ENCODE measurements at regions of chr19 and their contacts with region 1.

Region 1: GRCh38 chr19:50705422-50706019 is 14.1 kb downstream of the SHANK1 start:
- DNase-seq: peak; percentile 21
- ATAC-seq: peak; percentile 96
- H3K4me3 ChIP-seq: no peak overlapping the region
- H3K27ac ChIP-seq: no peak overlapping the region
- H3K4me1 ChIP-seq: no peaks in the 10 kb centered on the region
- H3K27me3 ChIP-seq: no peaks in the 10 kb centered on the region; a peak in 1 of 4 replicates
- CTCF ChIP-seq: peak; percentile 65 to 84 (median 73)
- EP300 ChIP-seq: no peak
- POLR2A ChIP-seq: no peak
- RAD21 ChIP-seq: peak; percentile 62

Region 2: DNA sequence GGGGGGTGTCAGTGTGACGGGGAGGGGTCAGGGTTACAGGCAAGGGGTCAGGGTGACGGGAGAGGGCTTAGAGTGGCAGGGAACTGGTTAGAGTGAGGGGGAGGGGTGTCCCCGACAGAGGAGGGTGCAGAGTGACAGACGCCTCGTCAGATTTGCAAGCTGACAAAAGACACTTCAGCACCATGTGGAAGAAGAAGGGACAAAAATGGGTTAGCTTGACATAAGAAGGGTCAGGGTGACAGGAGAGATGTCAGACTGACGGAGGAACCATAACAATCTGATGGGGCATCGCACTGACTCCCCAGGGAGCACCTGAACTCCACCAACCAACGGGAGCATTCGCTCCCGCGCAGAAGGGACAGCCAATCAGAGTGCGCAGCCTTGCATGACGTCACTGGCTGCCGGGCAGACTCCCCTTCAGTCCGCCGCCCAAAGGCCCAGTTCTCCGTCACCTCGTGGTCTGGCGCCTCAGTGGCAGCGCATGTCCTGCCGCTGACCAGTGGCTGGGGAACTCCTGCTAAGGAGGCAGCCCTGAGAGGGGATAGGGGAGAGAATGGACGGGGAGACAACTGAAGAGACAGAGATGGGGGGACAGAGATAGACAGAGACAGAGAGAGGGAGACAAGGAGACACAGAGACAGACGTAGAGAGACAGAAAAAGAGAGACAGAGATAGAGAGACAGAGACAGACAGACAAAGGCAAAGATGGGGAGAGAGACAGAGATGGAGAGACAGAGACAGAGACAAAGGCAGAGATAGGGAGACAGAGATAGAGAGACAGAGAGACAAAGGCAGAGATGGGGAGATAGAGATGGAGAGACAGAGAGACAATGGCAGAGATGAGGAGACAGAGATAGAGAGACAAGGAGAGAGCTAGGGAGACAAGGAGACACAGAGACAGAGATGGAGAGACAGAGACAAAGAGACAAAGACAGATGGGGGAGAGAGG is 26.1 kb before region 1 on chr19:
- CTCF ChIA-PET with region 1: no interaction called
- POLR2A ChIA-PET with region 1: no interaction called
- RAD21 ChIA-PET with region 1: no interaction called
- SMC1A ChIA-PET with region 1: no interaction called
- in situ Hi-C with region 1: no loop called
- intact Hi-C with region 1: no loop called
- DNase-seq: peak; percentile 61
- ATAC-seq: peak; percentile 99
- H3K4me3 ChIP-seq: no peak overlapping the region
- H3K27ac ChIP-seq: peak overlapping the region; percentile 44; the same call in 1 of the 2 replicates
- H3K4me1 ChIP-seq: peaks cover 2% of the 10 kb centered on the region; the same call in 1 of the 2 replicates
- H3K27me3 ChIP-seq: no peaks in the 10 kb centered on the region
- CTCF ChIP-seq: no peak
- EP300 ChIP-seq: no peak; a peak in 1 of 4 replicates
- POLR2A ChIP-seq: no peak
- RAD21 ChIP-seq: no peak

Region 3: GRCh38 chr19:50739132-50739913 is 33.8 kb after region 1 on chr19:
- CTCF ChIA-PET with region 1: no interaction called
- POLR2A ChIA-PET with region 1: no interaction called
- RAD21 ChIA-PET with region 1: no interaction called
- SMC1A ChIA-PET with region 1: no interaction called
- in situ Hi-C with region 1: no loop called
- intact Hi-C with region 1: no loop called
- DNase-seq: no peak
- ATAC-seq: no peak
- H3K4me3 ChIP-seq: no peak overlapping the region
- H3K27ac ChIP-seq: no peak overlapping the region
- H3K4me1 ChIP-seq: no peaks in the 10 kb centered on the region
- H3K27me3 ChIP-seq: no peaks in the 10 kb centered on the region; a peak in 1 of 4 replicates
- CTCF ChIP-seq: no peak
- EP300 ChIP-seq: no peak
- POLR2A ChIP-seq: no peak
- RAD21 ChIP-seq: no peak

Region 4: DNA sequence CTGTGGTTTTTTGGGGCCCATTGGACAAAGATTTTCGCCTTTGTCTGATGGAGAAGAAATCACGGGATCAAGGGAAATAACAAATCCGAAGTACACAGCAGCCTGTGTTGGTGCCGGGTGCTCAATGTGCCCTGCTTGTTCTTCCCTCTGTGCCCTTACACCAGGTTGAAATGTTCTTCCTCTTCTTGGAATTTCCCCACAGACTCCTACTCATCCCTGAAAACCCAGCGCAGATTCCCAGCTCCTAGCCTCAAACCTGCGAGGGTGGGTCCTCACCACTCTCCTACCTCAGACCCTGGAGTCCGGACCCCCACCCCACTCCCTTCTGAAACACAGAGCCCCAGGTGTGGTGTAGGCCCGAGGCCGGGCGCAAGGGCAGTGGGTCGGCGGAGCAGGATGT is 79.8 kb after region 1 on chr19:
- CTCF ChIA-PET with region 1: interaction called, 10 read pairs
- POLR2A ChIA-PET with region 1: no interaction called
- RAD21 ChIA-PET with region 1: interaction called, 8 read pairs
- SMC1A ChIA-PET with region 1: interaction called, 3 read pairs
- in situ Hi-C with region 1: no loop called
- intact Hi-C with region 1: loop called (anchors 2 kb)
- DNase-seq: no peak
- ATAC-seq: no peak
- H3K4me3 ChIP-seq: no peak overlapping the region
- H3K27ac ChIP-seq: no peak overlapping the region
- H3K4me1 ChIP-seq: no peaks in the 10 kb centered on the region; the same call in 1 of the 2 replicates
- H3K27me3 ChIP-seq: no peaks in the 10 kb centered on the region
- CTCF ChIP-seq: no peak
- EP300 ChIP-seq: no peak
- POLR2A ChIP-seq: no peak
- RAD21 ChIP-seq: no peak

Measured in GM12878 (cell line).